Activated naive CD8-positive, alpha-beta T cell treated with anti-CD3 and anti-CD28 coated beads, Interleukin-2, amount 10 ng/mL, durations not matched to agents 7 days and 5 days (primary cell): ENCODE measurements at regions of chr22 and their contacts with region 1.

Region 1: DNA sequence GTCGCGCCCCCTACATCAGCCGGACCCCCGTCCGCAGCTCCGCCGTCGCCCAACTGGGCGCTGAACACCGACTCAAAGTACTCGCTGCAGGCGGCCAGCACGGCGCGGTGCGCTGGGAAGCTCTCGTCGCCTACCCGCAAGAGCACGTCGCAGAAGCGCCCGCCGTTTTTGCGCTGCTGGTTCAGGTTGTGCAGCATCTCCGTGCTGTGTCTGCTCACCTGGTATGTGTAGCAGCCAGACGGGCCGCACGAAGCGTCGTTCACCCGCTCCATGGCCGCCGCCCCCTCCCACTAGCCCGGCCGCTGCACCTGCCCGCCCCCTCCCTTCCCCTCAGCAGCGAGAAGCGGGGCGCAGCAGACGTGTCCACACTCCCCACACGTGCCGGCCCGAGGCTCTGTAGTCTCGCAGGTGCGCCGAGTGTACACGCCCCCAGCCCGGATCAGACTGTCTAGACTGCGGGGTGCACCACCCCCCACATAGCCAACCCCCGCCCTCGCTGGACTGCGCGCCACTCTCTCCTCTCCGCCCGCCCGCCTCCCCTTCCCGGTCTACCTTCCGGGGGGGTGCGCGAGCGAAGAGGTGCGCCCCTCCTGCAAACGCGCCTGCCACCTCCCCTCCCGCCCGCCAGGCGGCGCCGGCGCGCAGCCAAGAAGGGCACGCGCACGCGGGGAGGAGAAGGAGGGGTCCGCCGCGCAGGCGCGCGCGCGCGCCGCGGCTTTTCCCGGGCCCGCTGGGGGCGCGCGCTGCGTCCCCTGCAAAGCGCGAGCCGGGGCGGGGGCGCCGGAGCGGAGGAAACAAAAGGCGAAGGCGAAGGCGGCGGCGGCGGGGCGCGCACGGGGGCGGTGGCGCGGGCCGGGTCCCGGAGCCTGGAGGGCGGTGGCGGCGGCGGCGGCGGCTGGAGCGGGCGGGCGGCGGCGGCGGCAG is 553 bp downstream of the PATZ1 start:
- DNase-seq: peak; percentile 95
- ATAC-seq: peak; percentile 54
- H3K4me3 Mint-ChIP-seq: peak overlapping the region; percentile 86
- H3K27ac Mint-ChIP-seq: peak overlapping the region; percentile 88
- H3K4me1 Mint-ChIP-seq: peaks cover 44% of the 10 kb centered on the region
- H3K27me3 Mint-ChIP-seq: no peaks in the 10 kb centered on the region

Region 2: DNA sequence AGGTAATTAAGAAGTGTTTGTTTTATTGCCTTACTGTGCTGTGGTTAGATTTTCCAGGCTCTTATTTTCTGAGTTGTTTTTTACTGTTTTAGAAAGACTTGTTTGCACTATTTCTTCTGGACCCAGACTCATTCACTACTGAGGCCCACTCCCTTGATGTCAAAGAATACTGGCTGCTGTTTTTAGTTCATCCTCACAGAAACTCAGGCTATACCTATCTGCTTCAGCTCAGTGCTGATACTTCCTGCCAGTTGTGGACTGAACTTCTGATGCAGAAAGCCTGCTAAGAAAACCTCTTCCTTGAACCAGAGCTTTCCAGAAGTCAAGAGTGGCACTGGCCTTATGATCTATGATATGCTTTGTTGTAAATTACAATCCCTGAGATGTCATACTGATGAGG is 37.4 kb before region 1 on chr22:
- POLR2A ChIA-PET with region 1: no interaction called
- DNase-seq: no peak
- ATAC-seq: peak; percentile 40
- H3K4me3 Mint-ChIP-seq: peak overlapping the region; percentile 34
- H3K27ac Mint-ChIP-seq: peak overlapping the region; percentile 67
- H3K4me1 Mint-ChIP-seq: peaks cover 20% of the 10 kb centered on the region
- H3K27me3 Mint-ChIP-seq: no peaks in the 10 kb centered on the region

Region 3: GRCh38 chr22:31360029-31360428 is 14.4 kb after region 1 on chr22:
- POLR2A ChIA-PET with region 1: no interaction called
- DNase-seq: no peak
- ATAC-seq: no peak
- H3K4me3 Mint-ChIP-seq: no peak overlapping the region
- H3K27ac Mint-ChIP-seq: no peak overlapping the region
- H3K4me1 Mint-ChIP-seq: no peaks in the 10 kb centered on the region
- H3K27me3 Mint-ChIP-seq: peaks cover 17% of the 10 kb centered on the region

Region 4: GRCh38 chr22:31399211-31400028 is 53.8 kb after region 1 on chr22 and contains the start of gene DRG1:
- POLR2A ChIA-PET with region 1: interaction called, 44 read pairs
- DNase-seq: peak; percentile 97
- ATAC-seq: peak; percentile 99
- H3K4me3 Mint-ChIP-seq: peak within 1 kb of the TSS; percentile 99
- H3K27ac Mint-ChIP-seq: peak within 1 kb of the TSS; percentile 92
- H3K4me1 Mint-ChIP-seq: peaks cover 20% of the 10 kb centered on the region
- H3K27me3 Mint-ChIP-seq: peaks cover 2% of the 10 kb centered on the region
- total RNA-seq, gene DRG1: 71.9 to 87.8 TPM

Region 5: DNA sequence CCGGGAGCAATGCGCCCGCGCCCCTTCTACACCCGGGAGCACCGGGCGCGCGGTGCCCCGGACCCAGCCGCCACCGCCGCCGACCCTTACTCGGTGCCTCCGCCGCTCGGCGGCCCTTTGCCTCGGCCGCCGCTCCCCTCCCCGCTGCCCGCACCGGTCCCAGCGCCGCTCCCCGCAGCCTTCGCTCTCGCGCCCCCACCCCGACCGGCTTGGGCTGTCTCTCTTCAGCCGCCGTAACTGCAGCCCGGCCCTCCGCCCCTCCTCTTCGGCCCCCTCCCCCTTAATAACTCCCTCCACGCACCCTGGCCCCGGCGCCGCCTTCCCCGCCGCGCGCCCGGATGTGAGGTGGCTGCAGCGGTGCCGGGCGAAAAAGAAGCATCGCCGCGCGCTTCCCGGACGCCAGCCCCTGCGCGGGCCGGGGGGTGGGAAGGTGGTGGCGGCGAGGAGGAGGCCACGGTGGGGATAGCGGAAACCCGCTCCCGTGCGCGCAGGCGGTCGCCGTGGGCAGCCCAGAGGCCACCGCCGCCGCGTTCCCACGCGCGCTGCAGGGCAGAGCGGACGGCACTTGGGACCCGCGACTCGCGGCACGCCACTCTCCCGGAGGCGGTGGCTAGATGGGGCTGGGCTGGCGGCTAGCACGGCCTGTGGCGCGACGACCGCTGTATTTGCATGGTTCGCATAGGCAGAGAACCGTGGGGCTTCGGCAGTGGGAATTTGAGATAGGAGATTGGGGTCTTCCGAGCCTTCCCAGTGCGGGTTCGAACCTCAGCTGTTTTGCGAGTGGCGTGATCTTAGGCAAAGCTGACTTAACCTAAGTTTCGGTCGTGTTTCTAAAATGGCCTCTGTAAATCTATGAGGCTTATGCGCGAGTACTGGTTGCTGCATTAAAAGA is 144.3 kb after region 1 on chr22 and contains the start of gene EIF4ENIF1:
- POLR2A ChIA-PET with region 1: interaction called, 10 read pairs
- DNase-seq: peak; percentile 87
- ATAC-seq: peak; percentile 73
- H3K4me3 Mint-ChIP-seq: peak within 1 kb of the TSS; percentile 95
- H3K27ac Mint-ChIP-seq: peak within 1 kb of the TSS; percentile 99
- H3K4me1 Mint-ChIP-seq: peaks cover 32% of the 10 kb centered on the region
- H3K27me3 Mint-ChIP-seq: no peaks in the 10 kb centered on the region
- total RNA-seq, gene EIF4ENIF1: 38.6 to 41.0 TPM

Region 6: DNA sequence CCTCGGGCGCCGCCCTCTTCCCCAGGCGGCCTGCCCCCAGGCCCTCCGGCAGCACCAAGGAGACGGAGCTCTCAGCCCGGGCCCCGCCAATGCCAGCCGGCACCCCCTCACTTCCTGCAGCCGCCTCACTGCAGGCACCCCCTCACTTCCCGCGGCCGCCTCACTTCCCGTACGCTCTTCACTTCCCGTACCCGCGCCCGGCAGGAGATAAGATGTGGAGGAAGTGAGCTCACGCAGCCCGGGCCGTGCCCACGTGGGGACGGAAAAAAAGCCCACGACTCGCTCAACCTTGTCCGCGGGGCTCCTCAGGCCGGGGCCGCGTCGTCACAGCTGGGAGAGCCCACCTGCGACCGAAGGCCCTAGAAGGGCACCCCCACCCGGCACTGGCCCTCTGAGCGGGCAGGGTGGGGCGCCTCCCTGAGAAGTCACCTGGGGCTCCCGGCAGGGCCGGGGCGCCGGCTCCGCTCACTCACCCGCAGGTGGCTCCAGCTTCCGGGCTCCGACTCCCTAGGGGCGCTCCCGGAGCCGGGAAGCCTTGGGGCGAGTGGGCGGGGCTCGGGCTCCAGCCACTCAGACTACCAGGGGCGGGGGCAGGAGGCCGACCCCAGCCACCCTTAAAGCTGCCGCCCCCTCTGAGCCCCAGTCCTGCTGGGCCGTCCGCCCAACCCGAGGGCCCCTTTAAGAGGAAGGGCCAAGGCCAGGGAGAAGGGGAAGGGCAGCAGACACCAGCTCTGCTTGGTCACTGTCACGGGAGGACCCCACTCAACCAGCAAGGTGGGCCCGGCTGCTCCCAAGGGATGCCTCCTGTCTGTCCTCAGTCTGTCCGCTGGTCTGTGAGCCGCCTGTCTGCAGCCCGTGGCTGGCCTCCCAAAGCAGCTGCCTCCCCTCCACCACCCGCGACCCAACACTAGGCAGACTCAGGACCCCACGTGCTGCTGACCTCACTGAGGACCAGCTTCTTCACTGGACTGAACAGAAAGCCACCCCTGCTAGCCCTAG is 285.0 kb after region 1 on chr22:
- POLR2A ChIA-PET with region 1: interaction called, 17 read pairs
- DNase-seq: peak; percentile 85
- ATAC-seq: peak; percentile 87
- H3K4me3 Mint-ChIP-seq: peak overlapping the region; percentile 84
- H3K27ac Mint-ChIP-seq: peak overlapping the region; percentile 90
- H3K4me1 Mint-ChIP-seq: peaks cover 30% of the 10 kb centered on the region
- H3K27me3 Mint-ChIP-seq: no peaks in the 10 kb centered on the region